MCF 10A (cell line): ENCODE measurements at regions of chr14 and their contacts with region 1.

Region 1: DNA sequence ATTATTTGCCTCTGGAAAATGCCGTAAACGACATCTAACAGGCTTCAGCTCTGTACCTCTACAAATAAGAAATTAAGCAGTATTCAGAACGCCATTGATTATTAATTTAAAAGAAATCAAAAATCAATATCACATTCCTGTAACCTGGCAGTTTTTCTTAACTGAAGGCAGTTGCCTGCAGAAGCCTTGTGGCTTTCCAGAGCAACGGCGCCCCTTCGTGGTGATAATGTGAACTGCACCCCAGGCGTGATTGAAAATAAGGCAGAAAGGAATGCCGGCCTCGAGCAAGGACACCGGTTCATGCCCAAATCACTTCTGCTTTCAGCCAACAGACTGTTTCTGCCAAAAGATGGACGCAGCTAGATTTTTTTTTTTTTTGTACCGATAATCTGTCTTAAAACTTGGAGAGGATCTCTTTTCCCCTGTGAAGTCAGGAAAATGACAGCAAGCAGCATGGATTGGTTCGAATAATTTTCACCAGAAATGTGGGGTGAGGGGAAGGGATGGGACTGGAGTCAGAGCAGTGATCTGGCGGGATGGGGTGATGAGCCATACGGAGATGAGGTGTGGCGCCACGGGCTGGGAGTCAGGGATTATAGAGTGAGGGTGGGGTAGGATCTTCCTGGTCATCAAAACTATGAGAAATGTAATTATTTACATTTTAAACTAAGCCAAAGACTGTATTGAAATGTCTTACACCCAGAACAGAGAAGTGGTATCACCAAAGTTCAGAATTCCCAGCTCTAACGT is 473.0 kb downstream of the DPF3 start:
- DNase-seq: peak; percentile 72
- H3K4me3 Mint-ChIP-seq: no peak overlapping the region
- H3K27ac Mint-ChIP-seq: no peak overlapping the region
- H3K4me1 Mint-ChIP-seq: no peaks in the 10 kb centered on the region
- H3K27me3 Mint-ChIP-seq: no peaks in the 10 kb centered on the region
- CTCF ChIP-seq: peak; percentile 96

Region 2: GRCh38 chr14:72023722-72024407 is 397.0 kb before region 1 on chr14:
- CTCF ChIA-PET with region 1: interaction called, 21 read pairs
- POLR2A ChIA-PET with region 1: interaction called, 5 read pairs
- intact Hi-C with region 1: loop called (anchors 1 kb)
- DNase-seq: peak; percentile 67
- H3K4me3 Mint-ChIP-seq: peak overlapping the region; percentile 24
- H3K27ac Mint-ChIP-seq: no peak overlapping the region
- H3K4me1 Mint-ChIP-seq: peaks cover 14% of the 10 kb centered on the region
- H3K27me3 Mint-ChIP-seq: peaks cover 9% of the 10 kb centered on the region
- CTCF ChIP-seq: peak; percentile 53

Region 3: GRCh38 chr14:72332046-72332445 is 88.9 kb before region 1 on chr14:
- CTCF ChIA-PET with region 1: no interaction called
- POLR2A ChIA-PET with region 1: no interaction called
- intact Hi-C with region 1: no loop called
- DNase-seq: peak; percentile 25
- H3K4me3 Mint-ChIP-seq: no peak overlapping the region
- H3K27ac Mint-ChIP-seq: no peak overlapping the region
- H3K4me1 Mint-ChIP-seq: no peaks in the 10 kb centered on the region
- H3K27me3 Mint-ChIP-seq: peaks cover 43% of the 10 kb centered on the region
- CTCF ChIP-seq: no peak

Region 4: GRCh38 chr14:72451054-72451972 is 30.4 kb after region 1 on chr14:
- CTCF ChIA-PET with region 1: no interaction called
- POLR2A ChIA-PET with region 1: no interaction called
- intact Hi-C with region 1: no loop called
- DNase-seq: no peak
- H3K4me3 Mint-ChIP-seq: no peak overlapping the region
- H3K27ac Mint-ChIP-seq: no peak overlapping the region
- H3K4me1 Mint-ChIP-seq: no peaks in the 10 kb centered on the region
- H3K27me3 Mint-ChIP-seq: no peaks in the 10 kb centered on the region
- CTCF ChIP-seq: no peak

Region 5: DNA sequence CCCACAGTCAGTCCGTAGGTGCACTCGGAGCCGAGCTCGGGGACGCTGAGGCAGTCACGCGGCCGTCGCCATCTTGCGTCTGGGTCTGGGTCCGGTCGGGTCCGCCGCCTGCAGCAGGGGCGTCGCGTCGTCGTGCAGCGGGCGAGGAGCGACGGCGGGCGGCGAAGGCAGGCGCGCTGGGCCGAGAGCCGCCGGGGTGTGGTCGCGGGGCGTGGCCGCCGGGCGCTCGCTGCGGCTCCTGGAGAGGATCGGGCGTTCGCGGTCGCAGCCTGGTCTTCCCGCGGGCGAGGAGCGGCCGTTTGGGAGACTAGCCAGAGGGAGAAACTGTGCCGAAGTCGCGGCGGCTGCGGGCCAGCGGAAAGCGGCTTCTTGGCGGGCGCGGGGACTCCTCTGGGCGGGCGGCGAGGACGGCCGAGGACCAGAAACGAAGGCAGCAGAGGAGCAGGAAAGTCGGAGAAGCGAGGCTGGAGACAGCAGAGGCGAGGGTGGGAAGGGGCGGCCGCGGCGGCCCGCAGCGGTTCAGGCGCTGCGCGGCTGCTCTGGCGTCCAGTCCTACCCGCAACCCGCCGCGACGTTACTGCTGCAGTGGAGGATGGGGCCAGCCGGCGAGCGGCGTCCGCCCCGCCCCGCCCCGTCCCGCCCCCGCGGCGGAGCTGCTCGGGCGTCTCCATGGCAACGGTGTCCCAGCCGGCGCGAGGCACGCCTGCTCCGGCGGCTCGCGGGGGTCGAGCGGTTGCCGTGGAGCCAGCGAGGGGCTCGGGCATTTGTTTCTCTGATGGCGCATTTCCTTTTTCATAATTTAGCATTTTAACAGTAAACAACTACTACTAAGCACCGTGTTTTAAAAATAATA is 1293.1 kb after region 1 on chr14 and contains the start of gene PNMA1:
- CTCF ChIA-PET with region 1: no interaction called
- POLR2A ChIA-PET with region 1: no interaction called
- intact Hi-C with region 1: no loop called
- DNase-seq: peak; percentile 79
- H3K4me3 Mint-ChIP-seq: peak within 1 kb of the TSS; percentile 86
- H3K27ac Mint-ChIP-seq: peak within 1 kb of the TSS; percentile 86
- H3K4me1 Mint-ChIP-seq: peaks cover 31% of the 10 kb centered on the region
- H3K27me3 Mint-ChIP-seq: no peaks in the 10 kb centered on the region
- CTCF ChIP-seq: no peak
- total RNA-seq, gene PNMA1: 43.3 and 46.3 TPM in 2 replicates